SK-N-SH (cell line): ENCODE measurements at regions of chr13 and their contacts with region 1.

Region 1: DNA sequence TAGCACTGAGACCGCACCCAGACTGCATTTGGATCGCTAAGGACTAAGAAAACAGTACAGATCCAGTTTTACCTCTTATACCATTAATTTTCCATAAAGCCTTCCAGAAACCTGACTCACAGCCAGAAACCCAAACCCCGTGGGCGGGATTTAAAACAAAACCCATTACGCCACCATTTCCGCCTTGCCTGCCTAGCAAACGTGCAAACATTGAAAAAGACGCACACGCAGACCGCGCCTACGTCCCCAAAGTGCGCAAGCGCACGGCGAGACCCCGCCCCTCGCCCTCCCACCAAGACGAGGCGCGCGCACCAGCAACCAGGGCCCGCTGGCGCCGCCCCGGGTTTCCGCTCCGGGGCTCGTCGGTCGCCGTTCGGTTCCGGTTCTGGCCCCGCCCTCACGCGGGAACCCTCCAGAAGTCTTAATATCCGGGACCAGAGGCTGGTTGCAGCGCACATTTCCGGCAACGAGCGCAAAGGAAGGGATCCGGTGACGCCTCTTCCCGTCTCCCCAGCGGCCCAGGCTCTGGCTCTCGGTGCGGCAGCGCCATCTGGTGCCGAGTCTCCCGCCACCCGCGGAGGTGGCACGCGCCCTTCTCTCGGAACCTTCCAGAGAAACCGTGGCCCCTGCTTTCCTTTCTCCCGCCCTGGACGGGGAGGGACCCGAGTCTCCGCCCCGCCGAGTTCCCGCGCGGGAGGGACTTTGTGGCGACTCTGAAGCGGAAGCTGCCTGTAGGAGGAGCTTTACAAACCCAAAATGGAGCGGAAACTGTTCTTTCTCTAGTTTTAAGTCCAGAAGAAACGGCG is 256.9 kb upstream of the STARD13 start:
- DNase-seq: peak; percentile 93
- H3K4me3 ChIP-seq: peak overlapping the region; percentile 53 to 66
- H3K27ac ChIP-seq: peak overlapping the region; percentile 100
- H3K4me1 ChIP-seq: peaks cover 19 to 25% of the 10 kb centered on the region in 2 experiments; a peak in 3 of 4 replicates
- H3K27me3 ChIP-seq: no peaks in the 10 kb centered on the region
- CTCF ChIP-seq: peak; percentile 90
- EP300 ChIP-seq: peak; percentile 49 to 58; a peak in 3 of 4 replicates
- RAD21 ChIP-seq: peak; percentile 96

Region 2: GRCh38 chr13:33228648-33229445 is 313.6 kb before region 1 on chr13:
- CTCF ChIA-PET with region 1: interaction called, 21 read pairs
- POLR2A ChIA-PET with region 1: no interaction called
- DNase-seq: peak; percentile 50
- H3K4me3 ChIP-seq: peak overlapping the region in 1 of 2 experiments; percentile 34; a peak in 1 of 4 replicates
- H3K27ac ChIP-seq: peak overlapping the region; percentile 57 to 97
- H3K4me1 ChIP-seq: peaks cover 17 to 47% of the 10 kb centered on the region in 2 experiments
- H3K27me3 ChIP-seq: no peaks in the 10 kb centered on the region
- CTCF ChIP-seq: peak; percentile 96
- EP300 ChIP-seq: peak in 1 of 2 experiments; percentile 17; a peak in 1 of 4 replicates
- RAD21 ChIP-seq: peak; percentile 95

Region 3: DNA sequence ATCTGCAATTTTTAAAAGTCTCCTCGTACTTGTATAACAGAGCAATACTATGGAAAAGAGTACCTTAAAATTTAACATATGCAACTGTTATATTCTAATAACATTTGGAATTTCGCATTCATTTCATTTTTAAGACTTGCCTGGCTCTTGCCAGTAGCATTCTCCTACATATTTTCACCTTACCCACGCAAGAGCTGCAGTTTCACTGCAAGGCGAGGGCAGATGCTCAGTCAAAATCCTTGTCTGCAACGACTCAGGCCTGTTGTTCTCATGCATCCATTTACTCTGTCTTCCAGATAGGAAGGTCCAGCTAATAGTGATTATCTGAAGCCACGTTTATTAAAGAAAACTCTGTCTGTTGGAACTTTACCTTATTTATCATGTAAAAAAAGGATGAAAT is 48.5 kb after region 1 on chr13:
- CTCF ChIA-PET with region 1: interaction called, 10 read pairs
- POLR2A ChIA-PET with region 1: no interaction called
- DNase-seq: no peak
- H3K4me3 ChIP-seq: no peak overlapping the region
- H3K27ac ChIP-seq: no peak overlapping the region
- H3K4me1 ChIP-seq: no peaks in the 10 kb centered on the region
- H3K27me3 ChIP-seq: no peaks in the 10 kb centered on the region
- CTCF ChIP-seq: no peak
- EP300 ChIP-seq: no peak
- RAD21 ChIP-seq: no peak

Region 4: GRCh38 chr13:33723772-33724435 is 181.4 kb after region 1 on chr13:
- CTCF ChIA-PET with region 1: interaction called, 21 read pairs
- POLR2A ChIA-PET with region 1: no interaction called
- DNase-seq: peak; percentile 66
- H3K4me3 ChIP-seq: peak overlapping the region in 1 of 2 experiments; percentile 38; a peak in 1 of 4 replicates
- H3K27ac ChIP-seq: peak overlapping the region in 1 of 2 experiments; percentile 86; a peak in 2 of 4 replicates
- H3K4me1 ChIP-seq: peaks cover 8 to 19% of the 10 kb centered on the region in 2 experiments; a peak in 3 of 4 replicates
- H3K27me3 ChIP-seq: no peaks in the 10 kb centered on the region
- CTCF ChIP-seq: peak; percentile 83
- EP300 ChIP-seq: no peak
- RAD21 ChIP-seq: peak; percentile 95